MCF 10A (cell line): ENCODE measurements at regions of chrX and their contacts with region 1.

Region 1: DNA sequence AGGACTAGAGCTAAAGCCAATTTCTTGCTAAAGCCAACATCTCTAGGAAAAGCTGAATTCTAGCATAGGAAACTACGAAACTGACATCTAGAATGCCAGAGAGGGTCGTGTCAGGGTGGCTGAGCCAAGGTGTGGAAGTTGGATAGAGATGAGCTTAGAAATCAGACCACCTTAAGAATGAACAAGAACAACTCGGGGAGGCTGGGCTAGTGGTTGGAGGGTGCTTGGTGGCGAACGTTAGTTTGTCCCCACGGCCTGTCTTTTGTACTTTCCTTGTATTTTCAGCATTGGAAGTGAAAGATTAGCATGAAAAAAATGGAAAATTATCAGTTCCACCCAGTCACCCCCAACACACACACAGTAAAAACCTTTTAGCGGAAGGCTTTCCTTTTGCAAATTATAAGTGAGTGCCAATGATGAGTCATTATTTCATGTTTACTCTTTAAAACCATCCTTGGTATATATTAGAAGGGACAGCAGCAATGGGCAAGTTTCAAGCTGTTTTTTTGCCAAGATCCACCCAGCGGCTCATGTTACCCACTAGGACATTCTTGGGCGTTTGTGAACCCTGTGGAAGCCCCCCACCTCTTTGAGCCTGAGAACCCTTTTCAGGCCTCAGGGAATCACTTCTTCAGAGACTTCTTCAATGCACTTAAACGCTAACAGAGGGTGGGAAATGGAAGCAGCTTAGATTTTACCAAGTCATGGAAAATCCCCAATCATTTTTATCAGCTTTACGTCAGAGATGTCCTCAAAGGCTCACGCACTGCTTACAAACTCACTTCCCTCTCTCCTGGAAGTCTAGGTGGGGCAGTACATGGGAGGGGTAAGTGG is 4.9 kb upstream of the PPEF1 start:
- DNase-seq: peak; percentile 85
- H3K4me3 Mint-ChIP-seq: peak overlapping the region; percentile 6
- H3K27ac Mint-ChIP-seq: peak overlapping the region; percentile 85
- H3K4me1 Mint-ChIP-seq: peaks cover 14% of the 10 kb centered on the region
- H3K27me3 Mint-ChIP-seq: no peaks in the 10 kb centered on the region
- CTCF ChIP-seq: no peak

Region 2: GRCh38 chrX:18833071-18833731 is 130.6 kb after region 1 on chrX:
- CTCF ChIA-PET with region 1: no interaction called
- POLR2A ChIA-PET with region 1: no interaction called
- intact Hi-C with region 1: no loop called
- DNase-seq: no peak
- H3K4me3 Mint-ChIP-seq: no peak overlapping the region
- H3K27ac Mint-ChIP-seq: no peak overlapping the region
- H3K4me1 Mint-ChIP-seq: no peaks in the 10 kb centered on the region
- H3K27me3 Mint-ChIP-seq: no peaks in the 10 kb centered on the region
- CTCF ChIP-seq: no peak

Region 3: GRCh38 chrX:18873189-18873791 is 170.7 kb after region 1 on chrX:
- CTCF ChIA-PET with region 1: no interaction called
- POLR2A ChIA-PET with region 1: no interaction called
- intact Hi-C with region 1: loop called (anchors 5 kb)
- DNase-seq: peak; percentile 75
- H3K4me3 Mint-ChIP-seq: peak overlapping the region; percentile 61
- H3K27ac Mint-ChIP-seq: peak overlapping the region; percentile 88
- H3K4me1 Mint-ChIP-seq: peaks cover 5% of the 10 kb centered on the region
- H3K27me3 Mint-ChIP-seq: no peaks in the 10 kb centered on the region
- CTCF ChIP-seq: no peak

Region 4: GRCh38 chrX:19237901-19238300 is 535.3 kb after region 1 on chrX:
- CTCF ChIA-PET with region 1: no interaction called
- POLR2A ChIA-PET with region 1: no interaction called
- intact Hi-C with region 1: no loop called
- DNase-seq: no peak
- H3K4me3 Mint-ChIP-seq: no peak overlapping the region
- H3K27ac Mint-ChIP-seq: no peak overlapping the region
- H3K4me1 Mint-ChIP-seq: no peaks in the 10 kb centered on the region
- H3K27me3 Mint-ChIP-seq: no peaks in the 10 kb centered on the region
- CTCF ChIP-seq: no peak